ENCODE measurements at regions of chr9 and their contacts with region 1.

Region 1: DNA sequence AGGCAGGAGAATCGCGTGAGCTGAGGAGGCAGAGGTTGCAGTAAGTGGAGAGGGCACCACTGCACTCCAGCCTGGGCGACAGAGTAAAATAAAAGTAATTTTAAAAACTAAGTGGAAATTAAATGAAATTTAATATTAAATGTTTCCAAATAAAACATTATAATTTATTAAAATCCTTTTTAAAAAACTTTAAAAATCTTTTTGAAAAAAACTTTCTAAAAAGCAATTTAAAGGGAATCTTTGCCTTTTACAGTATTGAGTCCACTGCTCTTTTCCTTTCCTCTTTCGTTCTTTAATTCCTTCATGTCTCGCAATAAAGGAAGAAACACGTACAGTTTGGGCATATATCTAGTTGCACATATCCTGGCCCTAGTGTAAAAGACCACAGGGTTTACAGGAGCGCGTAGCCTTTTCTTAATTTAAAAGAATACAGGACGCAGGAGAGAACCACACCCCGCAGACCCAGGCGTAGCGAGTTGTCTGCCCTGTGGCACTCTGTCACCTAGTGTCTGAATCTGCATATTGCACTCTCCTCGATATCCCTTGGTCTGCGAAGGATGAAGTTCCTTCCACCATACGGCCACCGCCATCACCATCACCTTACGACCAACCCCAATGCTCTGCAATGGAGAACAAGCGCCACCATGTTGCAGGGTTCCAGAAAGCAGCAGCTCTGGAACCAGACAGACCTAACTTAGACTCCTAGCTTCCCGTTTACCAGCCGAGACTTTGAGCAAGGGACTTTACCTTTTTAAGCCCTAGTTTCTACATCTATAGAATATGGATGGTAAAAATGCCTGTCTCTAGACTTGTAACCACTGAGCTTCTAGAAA is 77.6 kb upstream of the DMRT1 start:
- DNase-seq: peak in 3 of 5 donors; percentile 50 to 72 (median 53)
- H3K4me3 ChIP-seq: no peak overlapping the region
- H3K27ac ChIP-seq: no peak overlapping the region
- H3K4me1 ChIP-seq: peaks cover 0 to 6% (median 0%) of the 10 kb centered on the region in 3 donors
- H3K27me3 ChIP-seq: no peaks in the 10 kb centered on the region
- CTCF ChIP-seq: peak; percentile 85

Region 2: GRCh38 chr9:618478-618877 is 145.4 kb before region 1 on chr9:
- intact Hi-C with region 1: loop called (anchors 5 kb)
- DNase-seq: no peak
- H3K4me3 ChIP-seq: no peak overlapping the region
- H3K27ac ChIP-seq: no peak overlapping the region
- H3K4me1 ChIP-seq: peaks cover 0 to 9% (median 6%) of the 10 kb centered on the region in 3 donors
- H3K27me3 ChIP-seq: no peaks in the 10 kb centered on the region
- CTCF ChIP-seq: no peak

Measured in kidney (tissue), 22 donors.